Transverse colon (tissue), 4 donors: ENCODE measurements at regions of chr17 and their contacts with region 1.

Region 1: GRCh38 chr17:12320286-12320685 is 299.6 kb downstream of the MAP2K4 start:
- DNase-seq: no peak
- H3K4me3 ChIP-seq: no peak overlapping the region
- H3K27ac ChIP-seq: no peak overlapping the region
- H3K4me1 ChIP-seq: no peaks in the 10 kb centered on the region
- H3K27me3 ChIP-seq: no peaks in the 10 kb centered on the region
- CTCF ChIP-seq: no peak
- EP300 ChIP-seq: no peak
- POLR2A ChIP-seq: no peak

Region 2: DNA sequence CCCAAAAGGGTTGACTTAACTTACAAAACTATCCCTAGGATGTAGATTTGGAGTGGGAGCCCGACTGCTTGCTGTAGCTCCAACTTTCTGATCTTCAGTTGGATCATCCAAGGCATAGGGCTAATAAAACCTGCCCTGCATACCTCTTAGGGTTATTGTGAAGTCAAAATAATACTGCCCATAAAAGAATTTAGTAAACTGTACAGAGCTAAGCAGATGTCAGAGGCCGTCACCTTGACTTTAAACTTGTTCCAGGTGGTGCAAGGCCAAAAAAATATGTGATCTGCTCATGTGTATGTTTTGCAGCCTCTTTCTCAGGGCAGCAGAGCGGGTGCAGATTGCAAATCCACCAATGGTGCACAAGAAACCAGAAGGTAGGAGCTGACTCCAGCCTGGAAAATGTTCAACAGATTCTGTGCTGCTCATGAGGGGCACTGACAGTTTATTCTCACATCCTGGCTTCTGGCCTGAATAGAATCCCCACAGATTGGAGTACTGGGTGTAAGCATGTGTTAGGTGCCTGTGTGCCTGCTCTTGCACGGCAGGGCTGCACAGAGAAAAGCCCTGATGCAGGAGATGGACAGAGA is 118.9 kb before region 1 on chr17:
- in situ Hi-C with region 1: loop called in 2 of 4 experiments (anchors 25 kb)
- intact Hi-C with region 1: no loop called
- DNase-seq: no peak
- H3K4me3 ChIP-seq: no peak overlapping the region
- H3K27ac ChIP-seq: peak overlapping the region in 3 of 4 donors; percentile 25 to 55 (median 44)
- H3K4me1 ChIP-seq: no peaks in the 10 kb centered on the region
- H3K27me3 ChIP-seq: no peaks in the 10 kb centered on the region
- CTCF ChIP-seq: no peak
- EP300 ChIP-seq: no peak
- POLR2A ChIP-seq: no peak

Region 3: GRCh38 chr17:12242345-12242954 is 77.8 kb before region 1 on chr17:
- in situ Hi-C with region 1: no loop called
- intact Hi-C with region 1: no loop called
- DNase-seq: no peak
- H3K4me3 ChIP-seq: no peak overlapping the region
- H3K27ac ChIP-seq: peak overlapping the region in 3 of 4 donors; percentile 39 to 69 (median 48)
- H3K4me1 ChIP-seq: peaks cover 0 to 5% (median 0%) of the 10 kb centered on the region in 4 donors
- H3K27me3 ChIP-seq: no peaks in the 10 kb centered on the region
- CTCF ChIP-seq: no peak
- EP300 ChIP-seq: no peak
- POLR2A ChIP-seq: no peak